ENCODE measurements at regions of chr4 and their contacts with region 1.

Region 1: GRCh38 chr4:10116580-10117358 is at the start of gene WDR1:
- DNase-seq: peak; percentile 90
- H3K4me3 Mint-ChIP-seq: peak within 1 kb of the TSS; percentile 93
- H3K27ac Mint-ChIP-seq: peak within 1 kb of the TSS; percentile 96
- H3K4me1 Mint-ChIP-seq: peaks cover 65% of the 10 kb centered on the region
- H3K27me3 Mint-ChIP-seq: no peaks in the 10 kb centered on the region
- total RNA-seq, gene WDR1: 387 and 398 TPM in 2 replicates

Region 2: DNA sequence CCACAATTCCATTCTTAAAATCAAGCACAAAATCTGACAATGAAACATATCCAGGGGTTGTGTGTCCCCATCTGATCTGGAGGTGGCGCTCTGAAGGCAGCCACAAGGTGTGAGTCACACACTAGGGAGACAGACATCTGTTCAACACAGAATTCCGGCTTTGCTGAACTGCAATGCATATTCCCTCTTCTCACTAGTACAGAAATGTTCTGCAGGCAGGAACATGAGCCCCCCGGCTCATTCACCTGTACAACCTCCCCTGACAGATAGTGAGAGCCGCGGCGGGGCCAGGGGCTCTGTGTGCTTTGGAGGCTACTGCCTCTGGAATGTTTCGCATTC is 42.0 kb before region 1 on chr4:
- intact Hi-C with region 1: no loop called
- DNase-seq: no peak
- H3K4me3 Mint-ChIP-seq: no peak overlapping the region
- H3K27ac Mint-ChIP-seq: no peak overlapping the region
- H3K4me1 Mint-ChIP-seq: peaks cover 2% of the 10 kb centered on the region
- H3K27me3 Mint-ChIP-seq: no peaks in the 10 kb centered on the region

Region 3: GRCh38 chr4:10106421-10107039 is 10.2 kb before region 1 on chr4:
- intact Hi-C with region 1: loop called (anchors 1 kb)
- DNase-seq: peak; percentile 37
- H3K4me3 Mint-ChIP-seq: peak overlapping the region; percentile 67
- H3K27ac Mint-ChIP-seq: peak overlapping the region; percentile 83
- H3K4me1 Mint-ChIP-seq: peaks cover 96% of the 10 kb centered on the region
- H3K27me3 Mint-ChIP-seq: no peaks in the 10 kb centered on the region

Region 4: DNA sequence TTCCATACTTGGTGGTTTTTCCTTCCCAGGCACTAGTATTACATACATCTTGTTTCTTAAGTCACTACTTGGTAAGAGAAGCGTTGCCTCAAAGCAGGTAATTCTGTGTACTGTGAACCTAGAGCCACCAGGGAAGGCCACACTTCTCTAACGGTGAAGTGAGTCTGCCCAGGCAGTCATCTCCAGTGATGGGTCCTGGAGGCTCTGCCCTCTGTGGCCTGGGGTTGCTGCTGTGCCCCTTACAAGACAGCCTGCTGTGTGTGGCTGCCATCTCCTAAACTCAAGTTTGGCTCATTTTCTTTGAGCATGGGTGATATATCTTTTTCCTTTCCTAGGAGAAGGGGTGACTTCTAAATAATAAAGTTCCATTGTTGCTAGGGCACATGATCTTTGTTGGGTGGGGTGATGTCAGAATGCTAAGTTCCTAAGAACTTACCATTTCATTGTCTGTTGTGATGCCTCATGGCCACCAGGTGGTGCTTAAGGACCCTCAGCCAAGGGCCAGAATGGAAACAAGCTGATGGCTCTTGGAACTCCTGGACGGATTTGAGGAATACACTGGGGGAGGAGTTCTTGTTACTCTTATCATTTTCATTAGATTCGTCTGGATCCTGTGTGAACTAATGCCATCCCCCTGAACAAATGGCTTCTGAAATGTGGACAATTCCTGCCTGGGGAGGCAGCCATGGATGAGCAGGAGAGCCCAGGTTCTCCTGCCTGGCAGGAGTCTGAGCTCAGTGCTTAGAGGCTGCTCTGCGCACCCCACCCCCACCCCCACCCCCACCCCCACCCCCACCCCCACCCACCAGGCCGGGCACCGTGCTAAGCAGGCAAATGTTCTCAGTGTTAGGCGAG is 40.9 kb after region 1 on chr4:
- intact Hi-C with region 1: loop called (anchors 2 kb)
- DNase-seq: peak; percentile 16
- H3K4me3 Mint-ChIP-seq: no peak overlapping the region
- H3K27ac Mint-ChIP-seq: no peak overlapping the region
- H3K4me1 Mint-ChIP-seq: peaks cover 23% of the 10 kb centered on the region
- H3K27me3 Mint-ChIP-seq: peaks cover 5% of the 10 kb centered on the region

Region 5: DNA sequence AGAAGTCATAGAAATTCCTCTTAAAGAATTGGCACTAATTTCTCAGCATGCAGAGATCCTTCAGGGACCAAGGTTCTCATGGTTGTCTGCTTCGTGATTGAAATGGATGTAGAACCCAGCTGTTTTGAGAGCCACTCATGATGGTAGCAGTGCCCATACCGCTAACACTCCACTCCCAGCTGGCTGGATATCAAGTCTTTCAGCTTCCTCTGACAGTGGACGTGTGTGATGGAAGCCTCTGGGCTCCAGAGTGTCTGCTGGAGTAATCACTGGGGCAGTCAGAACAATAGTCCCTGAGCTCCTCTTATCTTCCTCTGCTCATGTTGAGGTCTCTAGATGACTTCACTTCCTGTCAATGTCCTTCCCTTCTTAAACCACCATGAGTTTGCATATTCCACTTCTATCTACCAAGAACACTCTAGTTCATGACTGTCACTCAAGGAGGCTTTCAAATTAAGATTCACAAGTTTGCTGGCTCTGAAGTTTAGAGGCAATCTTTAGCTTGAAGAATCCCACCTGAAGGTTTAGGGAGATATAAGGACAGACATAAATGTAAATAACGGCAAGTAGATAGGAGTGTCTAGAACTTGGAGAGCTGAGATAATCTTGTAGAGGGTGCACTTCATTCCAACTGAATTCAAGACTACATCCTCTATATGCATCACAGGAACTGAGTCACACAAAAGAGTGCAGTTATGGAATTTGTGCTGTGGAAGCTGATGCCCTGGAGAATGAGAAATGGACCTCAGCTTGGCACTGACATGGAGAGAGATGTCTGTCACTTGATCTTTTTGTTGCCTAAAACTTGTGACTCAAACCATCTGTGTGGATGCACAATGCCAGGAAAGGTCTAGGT is 64.4 kb after region 1 on chr4:
- intact Hi-C with region 1: loop called (anchors 1 kb)
- DNase-seq: peak; percentile 30
- H3K4me3 Mint-ChIP-seq: no peak overlapping the region
- H3K27ac Mint-ChIP-seq: peak overlapping the region; percentile 87
- H3K4me1 Mint-ChIP-seq: peaks cover 38% of the 10 kb centered on the region
- H3K27me3 Mint-ChIP-seq: no peaks in the 10 kb centered on the region

Region 6: GRCh38 chr4:10461091-10461849 is 344.5 kb after region 1 on chr4:
- intact Hi-C with region 1: loop called (anchors 1 kb)
- DNase-seq: peak; percentile 75
- H3K4me3 Mint-ChIP-seq: peak overlapping the region; percentile 75
- H3K27ac Mint-ChIP-seq: no peak overlapping the region
- H3K4me1 Mint-ChIP-seq: peaks cover 23% of the 10 kb centered on the region
- H3K27me3 Mint-ChIP-seq: peaks cover 41% of the 10 kb centered on the region

Measured in activated T-helper 2 cell treated with anti-CD3 and anti-CD28 coated beads, Interferon-gamma antibody, Interleukin-2, Interleukin-4, amounts not matched to agents 10 μg/mL and 5 μg/mL and 100 μg/mL, durations not matched to agents 14 hours and 24 hours and 36 hours (primary cell).